ENCODE measurements at regions of chr18 and their contacts with region 1.

Region 1: DNA sequence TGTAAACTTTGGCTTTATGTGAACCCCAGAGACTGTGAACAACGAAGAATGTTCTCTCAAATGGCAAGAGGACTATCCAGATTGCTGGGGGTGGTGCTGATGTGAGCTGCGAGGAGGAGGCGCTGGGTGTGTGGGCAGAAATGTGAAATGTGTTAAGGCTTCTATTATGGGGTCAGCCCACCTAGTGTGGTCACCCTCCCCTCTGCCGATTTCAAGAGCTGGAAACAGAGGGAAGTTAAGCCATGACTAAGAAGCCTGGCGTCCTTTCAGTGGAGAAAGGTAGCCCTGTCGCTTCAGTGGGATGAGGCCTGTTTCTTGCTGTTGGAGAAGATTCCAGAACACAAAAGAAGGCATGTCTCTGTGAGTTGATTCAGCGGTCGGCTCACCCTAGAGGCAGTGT is 89.0 kb upstream of the KCTD1 start:
- DNase-seq: no peak
- ATAC-seq: no peak
- H3K4me3 ChIP-seq: no peak overlapping the region
- H3K27ac ChIP-seq: no peak overlapping the region
- H3K4me1 ChIP-seq: peaks cover 0 to 6% (median 0%) of the 10 kb centered on the region in 9 donors
- H3K27me3 ChIP-seq: peaks cover 0 to 4% (median 0%) of the 10 kb centered on the region in 7 donors
- CTCF ChIP-seq: no peak

Region 2: GRCh38 chr18:26540043-26540628 is 97.2 kb before region 1 on chr18:
- intact Hi-C with region 1: no loop called
- DNase-seq: no peak
- ATAC-seq: no peak
- H3K4me3 ChIP-seq: no peak overlapping the region
- H3K27ac ChIP-seq: no peak overlapping the region
- H3K4me1 ChIP-seq: peaks cover 0 to 22% (median 6%) of the 10 kb centered on the region in 9 donors
- H3K27me3 ChIP-seq: no peaks in the 10 kb centered on the region
- CTCF ChIP-seq: no peak

Region 3: DNA sequence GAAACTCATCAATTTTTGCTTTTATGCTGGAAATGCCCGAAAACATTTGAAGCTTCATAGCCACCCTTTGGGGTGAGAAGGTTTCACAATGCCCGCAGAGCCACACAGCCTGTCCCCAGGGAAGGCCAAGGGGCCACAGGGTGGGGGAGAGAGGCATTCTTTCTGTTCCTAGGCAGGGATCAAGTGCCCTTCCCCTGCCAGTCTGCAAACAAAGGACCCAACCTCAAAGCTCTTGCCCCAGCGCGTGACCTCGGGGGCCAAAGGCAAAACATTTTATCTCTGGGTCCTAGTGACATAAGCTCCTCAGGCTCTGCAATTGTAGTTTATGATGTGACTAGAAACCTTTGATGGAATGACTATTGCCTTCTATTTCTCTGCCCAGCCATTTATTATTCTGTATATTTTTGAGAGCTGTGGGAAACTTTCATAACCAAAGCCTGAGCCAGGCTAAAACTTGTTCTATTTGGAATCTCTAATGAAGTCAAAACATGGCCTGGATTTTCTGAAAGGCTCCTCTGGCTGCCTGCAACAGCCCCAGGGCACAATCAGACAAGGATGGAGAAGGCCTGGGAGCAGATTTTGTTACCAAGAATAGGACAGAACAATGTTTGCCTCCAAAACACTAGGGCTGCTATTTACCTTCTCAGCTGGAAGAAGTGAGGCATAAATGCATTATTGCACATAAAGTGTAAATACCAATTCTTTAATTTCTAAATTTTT is 48.3 kb after region 1 on chr18:
- intact Hi-C with region 1: loop called in 1 of 10 experiments (anchors 5 kb)
- DNase-seq: no peak
- ATAC-seq: peak in 5 of 8 donors; percentile 55 to 93 (median 65)
- H3K4me3 ChIP-seq: no peak overlapping the region
- H3K27ac ChIP-seq: peak overlapping the region in 1 of 10 donors; percentile 24
- H3K4me1 ChIP-seq: peaks cover 0 to 9% (median 0%) of the 10 kb centered on the region in 9 donors
- H3K27me3 ChIP-seq: no peaks in the 10 kb centered on the region
- CTCF ChIP-seq: no peak

Measured in heart right ventricle (tissue), 16 donors.